ENCODE measurements at regions of chr11 and their contacts with region 1.

Region 1: DNA sequence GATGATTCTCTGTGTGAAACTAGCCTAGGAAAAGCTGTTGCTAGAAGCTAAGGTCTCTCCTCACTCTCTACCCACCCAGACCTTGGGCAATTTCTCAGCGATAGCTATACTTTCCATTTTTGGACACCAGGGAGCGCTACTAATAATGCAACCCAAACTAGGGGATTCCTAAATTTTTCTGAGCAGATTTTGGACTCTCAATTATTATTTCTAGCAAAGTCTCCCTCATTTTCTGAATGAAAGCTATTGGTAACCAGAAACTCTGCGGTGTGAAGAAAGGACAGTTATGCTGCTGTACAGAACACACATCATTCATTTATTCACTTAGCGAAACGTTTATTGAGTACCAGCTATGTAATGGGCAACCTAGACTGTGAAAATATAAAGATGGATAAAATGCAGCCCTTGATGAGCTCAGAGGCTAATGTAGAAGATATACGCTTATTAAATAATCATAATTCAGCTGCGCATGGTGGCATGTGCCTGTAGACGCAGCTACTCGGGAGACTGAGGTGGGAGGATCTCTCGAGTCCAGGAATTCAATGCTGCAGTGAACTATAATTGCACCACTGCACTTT is 6.1 kb upstream of the STIM1 start:
- DNase-seq: no peak
- ATAC-seq: peak; percentile 27 to 42
- H3K4me3 ChIP-seq: no peak overlapping the region
- H3K27ac ChIP-seq: no peak overlapping the region
- H3K4me1 ChIP-seq: peaks cover 16 to 26% of the 10 kb centered on the region in 2 donors
- H3K27me3 ChIP-seq: no peaks in the 10 kb centered on the region
- CTCF ChIP-seq: peak; percentile 44 to 75 (median 73)
- POLR2A ChIP-seq: no peak

Region 2: GRCh38 chr11:3807909-3808860 is 41.2 kb before region 1 on chr11 and contains the start of gene PGAP2:
- in situ Hi-C with region 1: no loop called
- intact Hi-C with region 1: no loop called
- DNase-seq: peak in 1 of 2 donors; percentile 26
- ATAC-seq: peak; percentile 64 to 74
- H3K4me3 ChIP-seq: peak within 1 kb of the TSS; percentile 63 to 83 (median 70)
- H3K27ac ChIP-seq: peak within 1 kb of the TSS; percentile 10 to 74 (median 59)
- H3K4me1 ChIP-seq: peaks cover 4 to 16% of the 10 kb centered on the region in 2 donors
- H3K27me3 ChIP-seq: no peaks in the 10 kb centered on the region
- CTCF ChIP-seq: peak in 4 of 5 experiments; percentile 37 to 68 (median 44)
- POLR2A ChIP-seq: no peak
- total RNA-seq, gene PGAP2: 4.6 to 8.0 (median 6.5) TPM

Region 3: GRCh38 chr11:3920148-3920852 is 70.9 kb after region 1 on chr11:
- in situ Hi-C with region 1: no loop called
- intact Hi-C with region 1: no loop called
- DNase-seq: peak; percentile 56 to 67
- ATAC-seq: peak; percentile 71 to 75
- H3K4me3 ChIP-seq: no peak overlapping the region
- H3K27ac ChIP-seq: peak overlapping the region; percentile 42 to 75 (median 64)
- H3K4me1 ChIP-seq: peaks cover 33 to 36% of the 10 kb centered on the region in 2 donors
- H3K27me3 ChIP-seq: no peaks in the 10 kb centered on the region
- CTCF ChIP-seq: no peak
- POLR2A ChIP-seq: no peak

Region 4: DNA sequence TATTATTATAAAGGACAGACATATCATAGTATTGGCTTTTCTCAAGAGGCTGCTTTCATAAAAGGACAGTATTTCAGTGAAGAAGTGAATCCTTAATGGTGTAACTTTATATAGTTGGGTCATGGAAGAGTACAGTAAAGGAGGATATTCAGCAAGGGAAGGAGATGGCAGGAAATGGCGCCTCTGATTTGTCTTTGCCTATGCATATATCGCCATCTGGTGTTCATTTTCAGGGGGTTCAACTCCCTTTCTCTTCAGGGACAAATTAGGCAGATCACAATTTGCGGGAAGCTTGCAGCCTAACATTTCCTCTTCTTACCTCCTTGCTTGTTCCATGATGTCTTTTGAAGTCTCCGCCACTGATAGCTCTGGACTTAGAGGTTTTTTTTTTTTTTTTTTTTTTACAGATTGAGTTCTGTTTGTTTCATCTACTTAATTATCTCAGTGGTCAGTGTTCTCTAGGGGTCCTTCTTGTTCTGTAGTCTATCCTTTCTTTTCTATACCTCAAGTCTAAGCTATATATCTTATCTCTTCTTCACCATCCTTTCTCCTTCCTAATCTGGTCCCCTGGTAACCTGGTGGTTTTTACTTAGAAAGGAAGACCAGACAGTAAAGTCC is 223.4 kb after region 1 on chr11:
- in situ Hi-C with region 1: loop called (anchors 5 kb)
- intact Hi-C with region 1: loop called (anchors 1 kb)
- DNase-seq: peak; percentile 53 to 55
- ATAC-seq: peak; percentile 82 to 85
- H3K4me3 ChIP-seq: no peak overlapping the region
- H3K27ac ChIP-seq: peak overlapping the region; percentile 42 to 73 (median 56)
- H3K4me1 ChIP-seq: peaks cover 35 to 54% of the 10 kb centered on the region in 2 donors
- H3K27me3 ChIP-seq: no peaks in the 10 kb centered on the region
- CTCF ChIP-seq: peak; percentile 83 to 94 (median 89)
- POLR2A ChIP-seq: no peak